Caco-2 (cell line): ENCODE measurements at regions of chr1 and their contacts with region 1.

Region 1: GRCh38 chr1:10960411-10961299 is 51.8 kb upstream of the TARDBP start:
- DNase-seq: peak; percentile 82 to 86
- H3K4me3 ChIP-seq: no peak overlapping the region
- H3K4me3 Mint-ChIP-seq: no peak overlapping the region
- H3K27ac Mint-ChIP-seq: no peak overlapping the region
- H3K4me1 ChIP-seq: no peaks in the 10 kb centered on the region
- H3K4me1 Mint-ChIP-seq: no peaks in the 10 kb centered on the region
- H3K27me3 ChIP-seq: no peaks in the 10 kb centered on the region
- H3K27me3 Mint-ChIP-seq: no peaks in the 10 kb centered on the region
- CTCF ChIP-seq: peak; percentile 80 to 91

Region 2: DNA sequence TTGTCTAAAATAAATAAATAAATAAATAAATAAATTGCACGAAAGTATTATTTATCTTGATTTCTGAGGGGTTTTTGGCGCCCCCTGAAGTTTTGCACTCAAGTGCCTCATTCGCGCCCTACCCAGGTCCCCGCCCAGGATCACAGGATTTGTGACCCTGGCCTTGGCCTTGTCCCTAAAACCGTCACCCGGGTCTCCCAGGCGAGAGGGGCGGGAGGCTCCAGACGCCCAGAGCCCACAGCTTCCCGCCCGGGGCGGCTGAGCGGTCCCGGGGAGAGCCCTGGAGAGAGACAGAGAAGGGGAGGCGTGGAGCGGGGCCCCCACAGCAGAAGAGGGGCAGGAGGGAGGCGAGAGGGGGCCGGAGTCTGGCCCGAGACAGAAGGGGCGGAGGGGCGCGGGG is 72.4 kb before region 1 on chr1:
- CTCF ChIA-PET with region 1: no interaction called
- POLR2A ChIA-PET with region 1: no interaction called
- intact Hi-C with region 1: no loop called
- DNase-seq: no peak
- H3K4me3 ChIP-seq: no peak overlapping the region
- H3K4me3 Mint-ChIP-seq: no peak overlapping the region
- H3K27ac Mint-ChIP-seq: no peak overlapping the region
- H3K4me1 ChIP-seq: peaks cover 6% of the 10 kb centered on the region; the same call in 1 of the 2 replicates
- H3K4me1 Mint-ChIP-seq: peaks cover 10% of the 10 kb centered on the region
- H3K27me3 ChIP-seq: no peaks in the 10 kb centered on the region
- H3K27me3 Mint-ChIP-seq: no peaks in the 10 kb centered on the region
- CTCF ChIP-seq: no peak

Region 3: GRCh38 chr1:10901086-10901890 is 59.4 kb before region 1 on chr1:
- CTCF ChIA-PET with region 1: no interaction called
- POLR2A ChIA-PET with region 1: no interaction called
- intact Hi-C with region 1: no loop called
- DNase-seq: peak; percentile 68 to 73
- H3K4me3 ChIP-seq: peak overlapping the region; percentile 10; the same call in 1 of the 2 replicates
- H3K4me3 Mint-ChIP-seq: peak overlapping the region; percentile 78
- H3K27ac Mint-ChIP-seq: peak overlapping the region; percentile 98
- H3K4me1 ChIP-seq: peaks cover 38% of the 10 kb centered on the region
- H3K4me1 Mint-ChIP-seq: peaks cover 25% of the 10 kb centered on the region
- H3K27me3 ChIP-seq: no peaks in the 10 kb centered on the region
- H3K27me3 Mint-ChIP-seq: no peaks in the 10 kb centered on the region
- CTCF ChIP-seq: no peak

Region 4: DNA sequence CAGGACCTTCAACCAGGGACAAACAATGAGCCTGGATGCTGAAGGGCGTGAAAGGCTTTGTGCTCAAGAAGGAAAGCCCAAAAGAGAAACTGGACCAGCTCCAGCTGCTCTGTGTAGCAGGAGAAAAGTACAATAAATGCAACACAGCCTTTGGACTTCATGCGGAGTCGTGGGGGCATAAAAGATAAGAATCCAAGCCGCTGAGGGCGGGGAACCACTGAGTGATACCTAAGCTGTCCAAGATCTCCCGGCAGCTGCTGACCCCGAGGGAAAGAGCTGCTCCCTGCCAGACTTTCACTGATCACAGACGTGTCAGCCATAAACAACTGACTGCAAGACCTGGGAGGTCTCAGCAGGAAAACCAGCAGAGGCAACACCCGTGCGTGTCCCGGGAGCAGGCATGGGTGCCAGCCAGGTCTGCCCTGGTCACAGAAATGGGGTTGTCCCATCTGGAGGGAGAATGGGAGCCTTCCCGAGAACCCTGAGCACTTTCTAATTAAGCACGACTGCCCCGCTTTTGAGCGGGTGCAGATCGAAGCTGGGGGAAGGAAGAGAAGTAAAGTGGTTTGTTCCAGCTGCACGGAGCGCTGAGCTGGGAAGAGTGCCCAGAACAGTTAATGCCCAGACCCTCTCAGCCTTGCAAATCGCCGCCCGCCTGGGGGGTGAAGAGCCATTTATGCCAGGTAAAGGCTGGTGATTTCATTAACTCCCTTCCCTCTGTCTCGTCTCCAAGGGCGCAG is 16.5 kb before region 1 on chr1:
- CTCF ChIA-PET with region 1: no interaction called
- POLR2A ChIA-PET with region 1: interaction called, 4 read pairs
- intact Hi-C with region 1: loop called (anchors 1 kb)
- DNase-seq: peak; percentile 32 to 58
- H3K4me3 ChIP-seq: peak overlapping the region; percentile 22
- H3K4me3 Mint-ChIP-seq: peak overlapping the region; percentile 61
- H3K27ac Mint-ChIP-seq: no peak overlapping the region
- H3K4me1 ChIP-seq: peaks cover 10% of the 10 kb centered on the region
- H3K4me1 Mint-ChIP-seq: peaks cover 11% of the 10 kb centered on the region
- H3K27me3 ChIP-seq: no peaks in the 10 kb centered on the region; the same call in 1 of the 2 replicates
- H3K27me3 Mint-ChIP-seq: no peaks in the 10 kb centered on the region
- CTCF ChIP-seq: no peak